Ascending aorta (tissue), 2 donors: ENCODE measurements at regions of chr1 and their contacts with region 1.

Region 1: DNA sequence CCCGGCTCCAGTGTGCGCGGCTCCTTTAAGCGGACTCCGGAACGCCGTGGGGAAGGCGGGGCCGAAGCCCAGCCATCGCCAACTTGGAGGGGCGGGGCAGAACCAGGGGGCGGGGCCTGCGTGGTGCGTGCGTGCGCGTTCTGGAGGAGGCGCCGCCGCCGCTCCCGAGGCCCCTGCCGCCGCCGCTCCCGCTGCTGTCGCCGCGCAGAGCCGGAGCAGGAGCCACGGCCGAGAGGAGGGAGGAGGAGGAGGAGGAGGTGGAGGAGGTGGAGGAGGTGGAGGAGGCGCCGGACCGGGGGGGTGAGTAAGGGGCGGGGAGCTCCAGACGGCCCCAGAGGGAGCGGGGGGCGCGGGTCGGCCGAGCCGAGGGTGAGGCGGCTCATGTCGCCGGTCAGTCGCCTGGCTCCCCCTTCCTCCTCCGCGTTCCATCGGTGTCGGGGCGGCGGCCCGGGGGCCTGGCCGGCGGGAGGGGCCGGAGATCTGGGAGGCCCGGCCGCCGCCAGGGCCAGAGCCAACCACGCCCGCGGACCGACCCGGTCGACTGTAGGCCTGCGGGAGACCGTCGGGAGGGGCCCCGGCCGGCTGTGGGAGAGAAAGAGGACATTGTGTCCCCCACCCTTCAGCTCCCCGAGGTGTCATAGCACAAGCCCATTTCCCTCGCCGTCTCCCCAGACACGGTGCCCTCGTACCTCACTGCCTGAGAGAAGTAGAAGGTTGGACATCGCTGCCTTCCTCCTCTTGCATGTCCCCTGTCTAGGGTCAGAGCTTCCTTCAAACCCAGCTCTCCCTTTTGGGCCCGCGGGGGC is at the start of gene RAP1A:
- DNase-seq: peak; percentile 69 to 97
- H3K4me3 ChIP-seq: peak within 1 kb of the TSS; percentile 92 to 96
- H3K27ac ChIP-seq: peak within 1 kb of the TSS; percentile 98 to 99
- H3K4me1 ChIP-seq: peaks cover 10 to 26% of the 10 kb centered on the region in 2 donors
- H3K27me3 ChIP-seq: no peaks in the 10 kb centered on the region
- CTCF ChIP-seq: no peak
- total RNA-seq, gene RAP1A: 44.1 TPM

Region 2: DNA sequence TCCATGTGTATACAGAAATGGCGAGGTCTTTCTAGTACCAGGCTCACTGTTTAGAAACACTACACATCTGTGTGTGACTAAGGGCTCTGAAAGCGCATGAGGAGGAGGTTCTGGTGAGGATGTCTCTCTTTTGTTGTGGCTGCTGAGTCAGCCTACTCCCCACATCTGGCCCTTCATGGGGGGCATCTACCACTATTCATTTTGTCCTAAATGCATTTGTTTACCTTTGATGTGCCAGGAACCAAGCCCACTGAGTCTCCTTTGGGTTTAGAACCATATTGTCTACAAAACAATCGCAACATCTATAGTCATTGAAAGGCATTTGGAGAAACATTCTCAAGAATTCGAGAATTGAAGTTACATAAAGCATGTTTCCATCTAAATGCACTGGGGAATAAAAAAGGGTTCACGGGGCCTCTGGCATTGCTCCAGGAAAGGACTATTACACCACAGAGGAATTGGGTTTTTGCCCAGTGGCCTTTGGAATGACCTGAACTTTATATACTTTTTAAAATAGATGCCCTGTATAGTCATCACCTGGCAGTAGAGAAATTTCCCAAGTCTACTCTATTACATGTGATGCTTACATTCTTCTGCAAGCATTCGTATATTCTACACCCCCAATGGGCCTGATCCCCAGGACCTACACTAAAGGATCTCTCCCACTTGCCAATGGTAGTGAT is 81.4 kb before region 1 on chr1:
- intact Hi-C with region 1: loop called (anchors 1 kb)
- DNase-seq: no peak
- H3K4me3 ChIP-seq: no peak overlapping the region
- H3K27ac ChIP-seq: no peak overlapping the region
- H3K4me1 ChIP-seq: peaks cover 0 to 21% of the 10 kb centered on the region in 2 donors
- H3K27me3 ChIP-seq: no peaks in the 10 kb centered on the region
- CTCF ChIP-seq: no peak

Region 3: DNA sequence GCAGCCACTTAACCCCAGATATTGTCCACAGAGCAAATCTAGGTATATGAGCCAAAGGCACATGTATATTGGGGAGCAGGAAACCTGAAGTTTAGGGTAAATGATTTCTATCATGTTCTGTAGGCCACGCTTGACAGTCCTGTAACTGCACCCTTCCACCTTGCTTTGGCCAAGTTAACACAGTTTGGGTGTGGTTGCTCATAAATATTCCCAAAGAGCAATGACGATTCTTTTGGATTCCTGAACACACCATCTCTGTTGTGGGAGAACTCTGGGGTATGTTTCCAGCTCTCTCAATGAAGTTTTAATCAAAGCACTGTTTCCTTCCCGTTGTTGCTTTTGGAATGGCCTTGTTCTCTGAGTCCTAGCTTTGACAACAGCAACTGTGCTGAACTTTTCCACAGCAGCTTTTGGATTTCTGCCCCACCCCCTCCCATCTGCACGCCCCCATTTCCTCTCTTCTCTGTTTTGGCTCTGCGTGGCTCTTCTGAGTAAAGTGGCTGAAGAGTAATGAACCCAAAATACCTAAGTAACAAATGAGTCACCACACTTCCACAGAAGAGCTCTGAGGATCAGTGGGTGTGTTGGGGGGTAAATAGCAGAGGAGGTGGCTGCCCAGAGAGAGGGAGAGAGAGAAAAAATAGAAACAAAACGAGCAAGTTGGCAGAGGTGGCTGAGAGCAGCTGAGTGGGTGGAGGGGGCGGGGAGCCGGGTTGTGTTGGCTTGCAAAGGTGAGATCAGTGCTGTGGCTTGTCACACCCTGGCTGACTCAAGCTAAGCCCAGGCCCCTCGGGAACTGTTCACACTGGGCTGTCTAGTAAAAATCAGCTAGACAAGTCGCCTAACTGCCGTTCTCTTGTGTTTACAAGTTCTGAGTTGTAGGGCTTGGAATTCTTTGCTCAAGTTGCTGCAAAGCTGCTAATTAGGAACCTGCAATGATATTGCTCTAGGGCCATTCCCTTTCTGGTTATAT is 27.2 kb before region 1 on chr1:
- intact Hi-C with region 1: loop called (anchors 1 kb)
- DNase-seq: peak; percentile 87 to 97
- H3K4me3 ChIP-seq: peak overlapping the region; percentile 27 to 39
- H3K27ac ChIP-seq: peak overlapping the region; percentile 74 to 75
- H3K4me1 ChIP-seq: peaks cover 5 to 21% of the 10 kb centered on the region in 2 donors
- H3K27me3 ChIP-seq: no peaks in the 10 kb centered on the region
- CTCF ChIP-seq: no peak

Region 4: DNA sequence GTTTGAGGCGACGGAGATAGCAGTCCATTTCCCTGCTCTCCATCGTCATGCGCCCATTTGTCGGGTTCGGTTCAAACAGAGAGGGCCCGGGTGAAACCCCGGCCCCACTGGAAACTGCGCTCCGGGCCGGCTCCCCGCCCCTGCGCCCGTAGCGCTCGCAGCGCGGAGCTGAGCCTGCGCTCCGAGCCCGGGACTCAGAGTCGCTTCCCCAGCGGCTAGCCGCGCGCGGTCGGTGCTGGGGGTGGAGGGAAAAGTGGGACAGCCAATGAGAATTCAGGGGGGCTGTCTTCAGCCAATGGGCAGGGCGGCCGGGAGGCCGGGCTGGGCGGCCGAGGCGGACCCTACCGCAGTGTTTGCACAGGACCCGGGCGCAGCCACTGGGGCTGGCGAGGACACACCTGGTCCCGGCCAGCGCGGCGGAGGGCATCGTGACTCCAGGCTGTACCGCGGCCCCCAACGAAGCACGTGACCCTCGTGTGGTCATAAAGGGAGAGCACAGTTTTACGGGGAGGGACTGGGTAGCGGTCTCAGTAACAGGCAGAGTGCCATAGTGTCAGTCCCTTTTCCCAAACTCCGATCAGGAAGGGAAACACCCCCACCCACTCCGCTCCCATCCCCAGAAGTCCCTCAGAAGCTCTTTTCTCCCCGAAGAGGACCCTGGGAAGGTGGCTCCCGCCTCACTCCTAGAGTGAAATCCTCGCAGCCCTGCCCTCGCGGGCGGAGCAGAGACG is 119.5 kb after region 1 on chr1 and contains the start of gene INKA2:
- intact Hi-C with region 1: loop called (anchors 2 kb)
- DNase-seq: peak; percentile 77 to 93
- H3K4me3 ChIP-seq: peak within 1 kb of the TSS; percentile 78 to 88
- H3K27ac ChIP-seq: peak within 1 kb of the TSS; percentile 95
- H3K4me1 ChIP-seq: peaks cover 0 to 14% of the 10 kb centered on the region in 2 donors
- H3K27me3 ChIP-seq: no peaks in the 10 kb centered on the region
- CTCF ChIP-seq: peak in 1 of 3 experiments; percentile 25
- total RNA-seq, gene INKA2: not detected

Region 5: DNA sequence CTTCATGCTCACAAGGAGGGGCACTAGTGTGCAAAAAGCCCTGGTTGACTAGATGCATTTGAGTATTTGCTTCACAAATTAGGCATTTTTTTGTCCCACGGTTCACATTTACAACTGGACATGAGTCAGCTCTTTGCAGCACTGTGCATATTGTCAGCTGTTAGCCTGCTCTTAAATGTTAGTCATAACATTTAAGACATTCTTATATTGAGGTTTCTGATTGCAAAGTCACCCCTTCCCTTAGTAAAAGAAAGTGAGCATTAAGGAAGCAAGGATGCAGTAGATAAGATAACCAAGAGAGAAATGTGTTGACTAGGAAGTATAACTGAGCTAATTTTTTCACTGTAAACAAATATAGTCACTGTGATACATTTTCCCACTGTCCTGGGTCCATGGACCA is 643.6 kb after region 1 on chr1:
- intact Hi-C with region 1: no loop called
- DNase-seq: no peak
- H3K4me3 ChIP-seq: no peak overlapping the region
- H3K27ac ChIP-seq: no peak overlapping the region
- H3K4me1 ChIP-seq: no peaks in the 10 kb centered on the region
- H3K27me3 ChIP-seq: no peaks in the 10 kb centered on the region
- CTCF ChIP-seq: no peak